ENCODE measurements at regions of chr11 and their contacts with region 1.

Region 1: GRCh38 chr11:4025248-4025966 is 69.2 kb upstream of the RRM1 start:
- DNase-seq: peak; percentile 95
- H3K4me3 ChIP-seq: peak overlapping the region in 1 of 3 experiments; percentile 28
- H3K27ac ChIP-seq: peak overlapping the region; percentile 80
- H3K4me1 ChIP-seq: peaks cover 23% of the 10 kb centered on the region
- H3K27me3 ChIP-seq: no peaks in the 10 kb centered on the region
- CTCF ChIP-seq: no peak
- POLR2A ChIP-seq: no peak

Region 2: DNA sequence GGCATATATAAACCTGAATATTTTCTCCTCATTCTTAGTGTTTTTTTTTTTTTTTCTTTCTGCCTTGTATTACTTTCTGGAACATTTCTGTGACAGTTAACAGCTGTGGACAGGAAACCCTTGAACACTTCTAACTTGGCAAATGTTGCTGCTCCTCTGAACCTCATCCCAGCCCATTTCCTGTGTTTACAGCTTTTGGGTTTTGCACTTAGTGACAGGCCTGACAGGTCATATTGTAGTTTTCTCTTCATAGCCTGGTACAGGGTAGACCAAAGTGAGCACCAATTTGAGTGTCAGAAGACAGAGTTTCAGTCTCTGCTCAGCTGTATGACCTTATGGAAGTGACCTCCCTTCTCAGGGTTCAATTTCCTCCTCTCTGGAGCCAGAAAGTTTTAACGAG is 78.3 kb before region 1 on chr11:
- CTCF ChIA-PET with region 1: interaction called, 3 read pairs
- POLR2A ChIA-PET with region 1: no interaction called
- dilution Hi-C with region 1: no loop called
- intact Hi-C with region 1: loop called (anchors 5 kb)
- DNase-seq: peak; percentile 77
- H3K4me3 ChIP-seq: no peak overlapping the region
- H3K27ac ChIP-seq: no peak overlapping the region
- H3K4me1 ChIP-seq: peaks cover 18% of the 10 kb centered on the region
- H3K27me3 ChIP-seq: no peaks in the 10 kb centered on the region
- CTCF ChIP-seq: no peak
- POLR2A ChIP-seq: no peak

Region 3: DNA sequence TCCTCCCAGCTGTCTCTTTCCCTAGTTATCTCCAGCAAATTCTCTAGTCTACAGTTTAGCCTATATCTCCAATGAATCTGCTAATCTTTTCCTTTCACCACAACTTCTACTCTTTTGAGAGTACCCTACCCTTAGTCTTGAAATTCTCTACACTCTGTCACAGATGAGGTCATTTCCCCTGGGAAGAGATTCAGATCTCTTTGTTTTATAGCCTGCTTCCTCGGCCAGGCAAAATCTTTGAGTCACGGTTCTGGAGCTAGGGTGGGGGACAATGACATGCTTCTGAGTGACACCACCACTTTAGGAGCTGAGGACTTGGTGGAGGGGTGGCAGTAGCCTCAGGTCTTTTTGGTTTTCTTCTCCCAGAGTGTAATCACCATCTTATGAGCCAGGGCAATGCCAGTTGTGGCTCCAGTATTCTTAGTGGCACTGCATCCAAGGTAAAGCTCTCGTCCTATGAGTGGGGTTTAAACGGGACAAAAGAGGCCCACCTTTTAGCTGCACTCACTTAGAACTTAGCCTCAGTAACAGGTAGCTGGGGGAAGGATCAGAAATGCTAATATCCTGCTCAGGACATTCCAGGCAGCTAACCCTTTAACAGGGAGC is 29.4 kb before region 1 on chr11:
- CTCF ChIA-PET with region 1: interaction called, 11 read pairs
- POLR2A ChIA-PET with region 1: interaction called, 5 read pairs
- dilution Hi-C with region 1: no loop called
- intact Hi-C with region 1: loop called (anchors 2 kb)
- DNase-seq: peak; percentile 82
- H3K4me3 ChIP-seq: no peak overlapping the region
- H3K27ac ChIP-seq: peak overlapping the region; percentile 68
- H3K4me1 ChIP-seq: peaks cover 16% of the 10 kb centered on the region
- H3K27me3 ChIP-seq: no peaks in the 10 kb centered on the region
- CTCF ChIP-seq: no peak
- POLR2A ChIP-seq: no peak

Measured in endothelial cell of umbilical vein (primary cell).